ENCODE measurements at regions of chr19 and their contacts with region 1.

Region 1: DNA sequence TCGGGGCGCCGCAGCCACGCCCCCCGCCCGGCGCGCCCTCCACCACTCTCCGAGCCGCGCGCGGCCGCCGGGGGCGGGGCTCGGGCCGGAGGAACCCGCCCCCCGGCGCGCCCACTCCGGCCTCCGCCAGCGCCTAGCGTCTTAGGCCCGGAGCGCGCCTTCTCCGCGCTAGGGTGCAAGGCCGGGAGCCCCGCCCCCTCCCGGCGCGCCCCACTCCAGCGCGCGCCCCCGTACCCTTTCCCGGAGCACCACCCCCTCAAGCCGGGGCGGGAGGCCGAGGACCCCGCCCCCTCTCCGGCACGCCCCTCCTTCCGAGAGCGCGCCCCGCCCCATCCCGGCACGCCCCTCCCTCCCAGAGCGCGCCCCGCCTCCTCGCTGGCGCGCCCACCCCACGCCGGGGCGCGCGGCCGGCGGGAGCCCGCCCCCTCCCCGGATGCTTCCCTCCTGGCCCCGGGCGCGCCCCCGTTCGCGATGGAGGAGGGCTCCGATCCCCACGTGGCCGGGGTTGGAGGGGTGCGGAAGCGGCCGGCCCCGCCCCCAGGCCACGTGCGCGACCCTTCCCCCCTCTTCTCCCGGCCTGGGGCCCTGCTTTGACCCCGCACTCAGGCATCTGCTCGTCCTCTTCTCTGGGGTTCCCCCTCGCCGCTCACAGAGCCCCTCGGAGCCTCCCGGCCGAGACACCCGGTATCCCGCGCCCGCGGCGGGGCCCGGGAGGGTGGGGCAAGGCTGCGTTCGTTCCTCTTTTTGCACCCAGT is 524 bp upstream of the KLF16 start:
- DNase-seq: peak; percentile 91 to 96
- H3K4me3 ChIP-seq: peak overlapping the region; percentile 89
- H3K4me3 Mint-ChIP-seq: peak overlapping the region; percentile 67
- H3K27ac Mint-ChIP-seq: peak overlapping the region; percentile 42
- H3K4me1 ChIP-seq: peaks cover 33% of the 10 kb centered on the region
- H3K4me1 Mint-ChIP-seq: peaks cover 5% of the 10 kb centered on the region
- H3K27me3 ChIP-seq: no peaks in the 10 kb centered on the region
- H3K27me3 Mint-ChIP-seq: no peaks in the 10 kb centered on the region
- CTCF ChIP-seq: no peak

Region 2: GRCh38 chr19:1875646-1876495 is 12.0 kb after region 1 on chr19:
- CTCF ChIA-PET with region 1: interaction called, 8 read pairs
- POLR2A ChIA-PET with region 1: interaction called, 12 read pairs
- intact Hi-C with region 1: no loop called
- DNase-seq: peak; percentile 84 to 89
- H3K4me3 ChIP-seq: peak overlapping the region; percentile 100
- H3K4me3 Mint-ChIP-seq: peak overlapping the region; percentile 91
- H3K27ac Mint-ChIP-seq: peak overlapping the region; percentile 87
- H3K4me1 ChIP-seq: peaks cover 15% of the 10 kb centered on the region
- H3K4me1 Mint-ChIP-seq: peaks cover 8% of the 10 kb centered on the region
- H3K27me3 ChIP-seq: no peaks in the 10 kb centered on the region
- H3K27me3 Mint-ChIP-seq: no peaks in the 10 kb centered on the region
- CTCF ChIP-seq: no peak

Region 3: DNA sequence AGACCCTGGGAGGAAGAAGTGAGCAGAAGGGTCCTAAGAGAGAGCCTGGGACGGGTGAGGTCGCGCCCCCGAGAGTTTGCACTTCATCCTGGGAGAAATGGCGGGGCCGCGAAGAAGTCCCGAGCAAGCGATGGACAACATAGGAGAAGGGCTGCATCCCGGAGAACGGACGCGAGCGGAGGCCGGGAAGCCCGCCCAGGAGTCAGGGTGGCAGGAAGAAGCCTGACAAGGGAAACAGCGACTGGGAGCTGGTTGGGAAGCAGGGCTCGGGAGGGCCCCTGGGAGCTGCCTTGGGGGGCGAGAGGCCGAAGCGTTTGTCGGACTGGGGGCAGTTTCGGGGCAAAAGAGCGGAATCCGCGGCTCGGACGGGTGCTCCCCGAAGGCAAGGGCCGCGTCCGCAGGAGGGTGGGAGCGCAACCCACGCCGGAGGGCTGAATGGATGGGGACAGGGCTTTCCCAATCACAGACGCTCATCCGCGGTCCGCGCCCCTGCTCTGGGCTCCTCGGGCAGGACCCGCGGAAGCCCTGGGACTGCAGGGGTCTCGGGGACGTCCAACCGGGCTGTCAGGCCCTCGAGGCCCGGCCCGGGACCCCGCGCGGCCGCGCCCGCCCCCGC is 20.9 kb after region 1 on chr19:
- CTCF ChIA-PET with region 1: interaction called, 5 read pairs
- POLR2A ChIA-PET with region 1: interaction called, 10 read pairs
- intact Hi-C with region 1: no loop called
- DNase-seq: no peak
- H3K4me3 ChIP-seq: peak overlapping the region; percentile 94
- H3K4me3 Mint-ChIP-seq: peak overlapping the region; percentile 91
- H3K27ac Mint-ChIP-seq: peak overlapping the region; percentile 89
- H3K4me1 ChIP-seq: peaks cover 27% of the 10 kb centered on the region
- H3K4me1 Mint-ChIP-seq: peaks cover 26% of the 10 kb centered on the region
- H3K27me3 ChIP-seq: no peaks in the 10 kb centered on the region
- H3K27me3 Mint-ChIP-seq: no peaks in the 10 kb centered on the region
- CTCF ChIP-seq: no peak

Region 4: GRCh38 chr19:1905071-1905862 is 41.4 kb after region 1 on chr19 and contains the starts of genes ADAT3 and SCAMP4:
- CTCF ChIA-PET with region 1: no interaction called
- POLR2A ChIA-PET with region 1: no interaction called
- intact Hi-C with region 1: loop called (anchors 1 kb)
- DNase-seq: peak; percentile 98 to 99
- H3K4me3 ChIP-seq: peak within 1 kb of the TSS; percentile 70
- H3K4me3 Mint-ChIP-seq: peak within 1 kb of the TSS; percentile 89
- H3K27ac Mint-ChIP-seq: peak within 1 kb of the TSS; percentile 94
- H3K4me1 ChIP-seq: peaks cover 24% of the 10 kb centered on the region
- H3K4me1 Mint-ChIP-seq: peaks cover 8% of the 10 kb centered on the region
- H3K27me3 ChIP-seq: no peaks in the 10 kb centered on the region
- H3K27me3 Mint-ChIP-seq: no peaks in the 10 kb centered on the region
- CTCF ChIP-seq: no peak
- total RNA-seq, gene ADAT3: 12.6 and 14.0 TPM in 2 replicates
- total RNA-seq, gene SCAMP4: 78.3 and 84.1 TPM in 2 replicates

Measured in Caco-2 (cell line).